Heart right ventricle (tissue), 16 donors: ENCODE measurements at regions of chr14 and their contacts with region 1.

Region 1: GRCh38 chr14:102209217-102209966 is 69.7 kb downstream of the WDR20 start:
- DNase-seq: no peak
- ATAC-seq: peak; percentile 43 to 87 (median 71)
- H3K4me3 ChIP-seq: no peak overlapping the region
- H3K27ac ChIP-seq: peak overlapping the region in 4 of 10 donors; percentile 0 to 55 (median 38)
- H3K4me1 ChIP-seq: peaks cover 0 to 10% (median 0%) of the 10 kb centered on the region in 9 donors
- H3K27me3 ChIP-seq: no peaks in the 10 kb centered on the region
- CTCF ChIP-seq: peak in 5 of 9 donors; percentile 26 to 51 (median 44)

Region 2: GRCh38 chr14:102154821-102155549 is 54.4 kb before region 1 on chr14:
- intact Hi-C with region 1: loop called in 1 of 10 experiments (anchors 5 kb)
- DNase-seq: no peak
- ATAC-seq: peak in 3 of 8 donors; percentile 26 to 38 (median 27)
- H3K4me3 ChIP-seq: no peak overlapping the region
- H3K27ac ChIP-seq: peak overlapping the region in 2 of 10 donors; percentile 5 to 17
- H3K4me1 ChIP-seq: peaks cover 0 to 74% (median 34%) of the 10 kb centered on the region in 9 donors
- H3K27me3 ChIP-seq: no peaks in the 10 kb centered on the region
- CTCF ChIP-seq: no peak

Region 3: GRCh38 chr14:102262929-102263462 is 53.6 kb after region 1 on chr14:
- intact Hi-C with region 1: no loop called
- DNase-seq: no peak
- ATAC-seq: peak in 6 of 8 donors; percentile 8 to 42 (median 34)
- H3K4me3 ChIP-seq: no peak overlapping the region
- H3K27ac ChIP-seq: peak overlapping the region in 9 of 10 donors; percentile 1 to 91 (median 37)
- H3K4me1 ChIP-seq: peaks cover 0 to 39% (median 29%) of the 10 kb centered on the region in 9 donors
- H3K27me3 ChIP-seq: no peaks in the 10 kb centered on the region
- CTCF ChIP-seq: no peak